AG04450 (cell line): ENCODE measurements at regions of chr9 and their contacts with region 1.

Region 1: GRCh38 chr9:133813749-133814585 is 75.8 kb upstream of the SARDH start:
- DNase-seq: no peak
- H3K4me3 ChIP-seq: no peak overlapping the region
- H3K27ac ChIP-seq: no peak overlapping the region
- H3K27me3 ChIP-seq: no peaks in the 10 kb centered on the region
- CTCF ChIP-seq: no peak

Region 2: GRCh38 chr9:133522073-133523035 is 291.6 kb before region 1 on chr9:
- CTCF ChIA-PET with region 1: no interaction called
- POLR2A ChIA-PET with region 1: no interaction called
- DNase-seq: no peak
- H3K4me3 ChIP-seq: no peak overlapping the region
- H3K27ac ChIP-seq: no peak overlapping the region
- H3K27me3 ChIP-seq: peaks cover 59% of the 10 kb centered on the region
- CTCF ChIP-seq: no peak

Region 3: DNA sequence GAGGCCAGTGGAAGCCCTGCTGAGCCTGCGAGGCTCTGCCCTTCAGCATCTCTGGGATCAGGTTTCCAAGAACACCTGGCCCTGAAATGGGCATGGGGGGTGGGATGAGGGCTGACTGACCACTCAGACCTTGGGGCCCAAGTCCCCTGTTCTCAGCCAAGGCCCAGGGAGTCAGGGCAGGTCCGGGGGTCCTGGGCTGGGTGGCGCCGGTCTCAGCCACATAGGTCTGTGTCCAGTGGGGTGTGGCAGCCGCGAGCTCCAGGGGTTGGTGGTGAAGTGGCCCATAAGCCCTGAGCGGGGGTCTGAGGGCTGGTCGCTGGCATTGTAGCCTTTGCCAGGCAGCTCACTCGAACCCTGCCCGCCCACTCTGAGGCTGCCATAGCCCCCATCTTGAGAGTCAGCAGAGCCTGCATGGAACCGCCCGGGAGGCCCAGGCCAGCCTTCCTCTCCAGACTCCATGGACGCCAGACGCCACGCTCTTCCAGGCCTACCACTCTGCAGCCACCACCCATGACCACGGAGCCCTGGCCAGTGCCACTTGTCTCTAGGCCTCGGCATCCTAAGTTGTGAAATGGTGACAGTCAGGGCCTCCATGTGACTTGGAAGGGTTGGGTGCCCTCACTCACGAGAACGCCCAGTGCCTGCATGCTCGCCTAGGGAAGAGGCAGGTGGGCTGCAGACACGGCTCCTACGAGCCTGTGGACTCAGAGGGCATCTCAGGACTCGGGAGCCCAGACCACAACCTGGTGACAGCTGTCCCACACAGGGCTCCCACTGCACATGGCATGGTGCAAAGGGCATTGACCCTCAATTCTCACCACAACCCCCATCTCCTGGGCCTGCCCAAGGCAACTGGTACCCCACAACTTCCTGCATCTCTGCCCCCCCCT is 184.5 kb before region 1 on chr9:
- CTCF ChIA-PET with region 1: no interaction called
- POLR2A ChIA-PET with region 1: no interaction called
- DNase-seq: no peak
- H3K4me3 ChIP-seq: no peak overlapping the region
- H3K27ac ChIP-seq: no peak overlapping the region
- H3K27me3 ChIP-seq: peaks cover 22% of the 10 kb centered on the region
- CTCF ChIP-seq: no peak

Region 4: GRCh38 chr9:133803028-133803585 is 10.9 kb before region 1 on chr9:
- CTCF ChIA-PET with region 1: no interaction called
- POLR2A ChIA-PET with region 1: interaction called, 10 read pairs
- DNase-seq: no peak
- H3K4me3 ChIP-seq: no peak overlapping the region
- H3K27ac ChIP-seq: no peak overlapping the region
- H3K27me3 ChIP-seq: no peaks in the 10 kb centered on the region
- CTCF ChIP-seq: no peak

Region 5: GRCh38 chr9:134002796-134003195 is 188.8 kb after region 1 on chr9:
- CTCF ChIA-PET with region 1: no interaction called
- POLR2A ChIA-PET with region 1: no interaction called
- DNase-seq: no peak
- H3K4me3 ChIP-seq: no peak overlapping the region
- H3K27ac ChIP-seq: no peak overlapping the region
- H3K27me3 ChIP-seq: peaks cover 11% of the 10 kb centered on the region
- CTCF ChIP-seq: no peak